Ascending aorta (tissue), 2 donors: ENCODE measurements at regions of chr17 and their contacts with region 1.

Region 1: DNA sequence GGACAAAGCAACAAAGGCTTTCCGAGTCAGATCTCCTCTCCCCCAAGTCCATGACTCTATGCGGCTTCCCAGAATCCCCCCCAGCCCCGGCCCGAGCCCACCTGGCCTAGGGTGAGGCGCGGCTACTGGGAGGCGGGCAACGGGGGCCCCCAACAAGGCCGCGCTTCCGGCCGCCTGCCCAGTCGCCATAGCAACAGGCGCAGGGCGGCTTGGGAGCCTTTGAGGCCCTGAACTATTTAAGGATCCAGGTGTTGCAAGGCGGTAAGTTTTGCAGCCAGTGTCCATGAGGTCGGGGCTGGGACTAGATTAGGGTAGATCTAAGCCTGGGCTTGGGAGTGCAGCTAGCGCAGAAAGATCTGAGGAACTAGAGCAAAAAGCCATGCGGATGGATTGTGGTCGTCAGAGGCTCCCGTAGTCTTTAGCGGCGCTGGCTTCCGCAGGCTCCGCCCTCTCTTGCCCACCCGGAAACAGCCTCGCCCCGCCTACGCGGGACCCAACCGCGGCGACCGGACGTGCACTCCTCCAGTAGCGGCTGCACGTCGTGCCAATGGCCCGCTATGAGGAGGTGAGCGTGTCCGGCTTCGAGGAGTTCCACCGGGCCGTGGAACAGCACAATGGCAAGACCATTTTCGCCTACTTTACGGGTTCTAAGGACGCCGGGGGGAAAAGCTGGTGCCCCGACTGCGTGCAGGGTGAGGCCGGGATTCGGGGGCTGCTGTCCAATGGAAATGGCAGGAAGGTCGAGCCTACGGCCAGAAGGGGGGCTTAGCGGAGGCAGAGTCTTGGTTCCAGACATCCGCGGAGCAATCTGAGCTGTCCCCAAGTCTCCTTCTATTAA is at the starts of genes KIAA0753 and TXNDC17:
- DNase-seq: peak; percentile 55 to 96
- H3K4me3 ChIP-seq: peak within 1 kb of the TSS; percentile 64 to 93
- H3K27ac ChIP-seq: peak within 1 kb of the TSS; percentile 74 to 84
- H3K4me1 ChIP-seq: peaks cover 7 to 17% of the 10 kb centered on the region in 2 donors
- H3K27me3 ChIP-seq: no peaks in the 10 kb centered on the region
- CTCF ChIP-seq: no peak
- total RNA-seq, gene KIAA0753: 2.9 TPM
- total RNA-seq, gene TXNDC17: 0.96 TPM

Region 2: GRCh38 chr17:5281814-5282653 is 1358.7 kb before region 1 on chr17 and contains the start of gene RABEP1:
- intact Hi-C with region 1: loop called (anchors 5 kb)
- DNase-seq: peak; percentile 35 to 91
- H3K4me3 ChIP-seq: peak within 1 kb of the TSS; percentile 94 to 99
- H3K27ac ChIP-seq: peak within 1 kb of the TSS; percentile 87 to 99
- H3K4me1 ChIP-seq: peaks cover 0 to 18% of the 10 kb centered on the region in 2 donors
- H3K27me3 ChIP-seq: no peaks in the 10 kb centered on the region
- CTCF ChIP-seq: peak in 2 of 3 experiments; percentile 7 to 10
- total RNA-seq, gene RABEP1: 9.3 TPM